Calu3 (cell line): ENCODE measurements at regions of chr20 and their contacts with region 1.

Region 1: GRCh38 chr20:57709931-57710799 is at the start of gene PMEPA1:
- DNase-seq: peak; percentile 100
- H3K4me3 Mint-ChIP-seq: peak within 1 kb of the TSS; percentile 88
- H3K27ac Mint-ChIP-seq: peak within 1 kb of the TSS; percentile 97
- H3K4me1 Mint-ChIP-seq: peaks cover 46% of the 10 kb centered on the region
- H3K27me3 Mint-ChIP-seq: no peaks in the 10 kb centered on the region
- CTCF ChIP-seq: no peak
- total RNA-seq, gene PMEPA1: 732 and 1,302 TPM in 2 replicates

Region 2: GRCh38 chr20:57622579-57623377 is 87.4 kb before region 1 on chr20:
- CTCF ChIA-PET with region 1: interaction called, 12 read pairs
- intact Hi-C with region 1: no loop called
- DNase-seq: peak; percentile 96
- H3K4me3 Mint-ChIP-seq: peak overlapping the region; percentile 11
- H3K27ac Mint-ChIP-seq: peak overlapping the region; percentile 18
- H3K4me1 Mint-ChIP-seq: peaks cover 40% of the 10 kb centered on the region
- H3K27me3 Mint-ChIP-seq: no peaks in the 10 kb centered on the region
- CTCF ChIP-seq: peak; percentile 99

Region 3: DNA sequence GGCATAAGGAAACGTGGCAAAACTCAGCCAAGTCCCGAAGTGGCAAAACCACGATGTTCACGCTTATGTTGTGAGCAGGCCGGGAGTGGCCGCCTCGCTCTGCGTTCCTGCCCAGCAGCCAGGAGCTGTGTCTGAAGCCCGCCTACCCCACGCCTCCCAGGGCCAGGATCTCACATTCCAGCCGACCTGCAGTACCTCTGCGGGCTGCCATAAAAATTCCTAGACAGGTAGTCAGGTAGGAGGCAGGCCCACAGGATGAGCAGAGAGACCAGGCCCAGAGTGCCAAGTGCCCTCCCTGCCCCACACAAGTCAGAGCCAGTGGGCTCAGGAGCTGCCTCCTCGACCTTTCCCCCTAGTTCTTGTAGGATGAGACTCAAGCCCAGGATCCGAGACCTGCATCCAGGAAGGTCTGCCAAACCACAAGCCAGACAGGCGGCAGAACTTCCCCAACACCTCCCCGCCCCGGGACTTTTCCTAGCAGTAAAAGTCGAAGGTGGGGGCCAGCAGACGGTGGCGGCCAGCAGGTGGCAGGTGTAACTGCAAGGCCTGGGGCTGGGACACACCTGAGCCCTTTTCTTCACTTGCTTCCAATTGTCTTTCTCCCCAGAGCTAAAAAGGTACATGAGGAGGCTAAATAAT is 17.0 kb before region 1 on chr20:
- CTCF ChIA-PET with region 1: interaction called, 21 read pairs
- intact Hi-C with region 1: loop called (anchors 1 kb)
- DNase-seq: peak; percentile 94
- H3K4me3 Mint-ChIP-seq: peak overlapping the region; percentile 88
- H3K27ac Mint-ChIP-seq: peak overlapping the region; percentile 97
- H3K4me1 Mint-ChIP-seq: peaks cover 91% of the 10 kb centered on the region
- H3K27me3 Mint-ChIP-seq: no peaks in the 10 kb centered on the region
- CTCF ChIP-seq: peak; percentile 68

Region 4: GRCh38 chr20:57698117-57698866 is 11.9 kb before region 1 on chr20:
- CTCF ChIA-PET with region 1: interaction called, 21 read pairs
- intact Hi-C with region 1: loop called (anchors 1 kb)
- DNase-seq: peak; percentile 94
- H3K4me3 Mint-ChIP-seq: peak overlapping the region; percentile 88
- H3K27ac Mint-ChIP-seq: peak overlapping the region; percentile 97
- H3K4me1 Mint-ChIP-seq: peaks cover 92% of the 10 kb centered on the region
- H3K27me3 Mint-ChIP-seq: no peaks in the 10 kb centered on the region
- CTCF ChIP-seq: no peak

Region 5: GRCh38 chr20:57755608-57756007 is 45.4 kb after region 1 on chr20:
- CTCF ChIA-PET with region 1: no interaction called
- intact Hi-C with region 1: no loop called
- DNase-seq: no peak
- H3K4me3 Mint-ChIP-seq: no peak overlapping the region
- H3K27ac Mint-ChIP-seq: no peak overlapping the region
- H3K4me1 Mint-ChIP-seq: peaks cover 10% of the 10 kb centered on the region
- H3K27me3 Mint-ChIP-seq: no peaks in the 10 kb centered on the region
- CTCF ChIP-seq: no peak

Region 6: GRCh38 chr20:57902290-57902872 is 192.2 kb after region 1 on chr20:
- CTCF ChIA-PET with region 1: interaction called, 5 read pairs
- intact Hi-C with region 1: loop called (anchors 1 kb)
- DNase-seq: peak; percentile 63
- H3K4me3 Mint-ChIP-seq: peak overlapping the region; percentile 11
- H3K27ac Mint-ChIP-seq: peak overlapping the region; percentile 76
- H3K4me1 Mint-ChIP-seq: peaks cover 77% of the 10 kb centered on the region
- H3K27me3 Mint-ChIP-seq: no peaks in the 10 kb centered on the region
- CTCF ChIP-seq: peak; percentile 40

Region 7: DNA sequence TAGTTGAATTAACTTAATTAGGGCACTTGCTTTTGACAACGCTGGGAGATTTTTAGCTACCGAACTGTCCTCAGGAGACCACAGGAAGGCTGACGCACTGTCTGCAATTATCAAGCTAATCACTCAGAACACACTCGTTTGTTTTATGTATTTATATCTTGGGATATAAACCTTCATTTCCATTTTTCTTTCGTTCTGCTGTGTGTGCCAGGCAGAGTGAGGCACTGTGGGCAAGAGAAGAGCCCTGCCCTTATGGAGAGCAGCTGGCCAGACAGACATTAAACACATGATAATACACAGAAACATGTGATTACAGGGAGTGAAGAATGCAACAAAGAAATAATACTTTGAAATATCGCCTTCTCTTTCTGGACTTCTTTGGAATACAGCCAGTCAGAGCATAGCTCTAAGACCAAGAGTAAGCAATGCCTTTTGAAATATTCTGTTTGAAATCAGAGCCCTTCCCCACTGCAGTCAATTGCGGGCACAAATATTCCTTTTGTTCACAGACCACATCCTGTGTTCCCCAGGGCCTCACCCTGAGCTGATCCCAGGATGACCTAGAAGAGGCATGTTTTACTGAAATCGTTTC is 421.5 kb after region 1 on chr20:
- CTCF ChIA-PET with region 1: interaction called, 4 read pairs
- intact Hi-C with region 1: loop called (anchors 5 kb)
- DNase-seq: peak; percentile 86
- H3K4me3 Mint-ChIP-seq: peak overlapping the region; percentile 63
- H3K27ac Mint-ChIP-seq: peak overlapping the region; percentile 99
- H3K4me1 Mint-ChIP-seq: peaks cover 89% of the 10 kb centered on the region
- H3K27me3 Mint-ChIP-seq: no peaks in the 10 kb centered on the region
- CTCF ChIP-seq: no peak

Region 8: DNA sequence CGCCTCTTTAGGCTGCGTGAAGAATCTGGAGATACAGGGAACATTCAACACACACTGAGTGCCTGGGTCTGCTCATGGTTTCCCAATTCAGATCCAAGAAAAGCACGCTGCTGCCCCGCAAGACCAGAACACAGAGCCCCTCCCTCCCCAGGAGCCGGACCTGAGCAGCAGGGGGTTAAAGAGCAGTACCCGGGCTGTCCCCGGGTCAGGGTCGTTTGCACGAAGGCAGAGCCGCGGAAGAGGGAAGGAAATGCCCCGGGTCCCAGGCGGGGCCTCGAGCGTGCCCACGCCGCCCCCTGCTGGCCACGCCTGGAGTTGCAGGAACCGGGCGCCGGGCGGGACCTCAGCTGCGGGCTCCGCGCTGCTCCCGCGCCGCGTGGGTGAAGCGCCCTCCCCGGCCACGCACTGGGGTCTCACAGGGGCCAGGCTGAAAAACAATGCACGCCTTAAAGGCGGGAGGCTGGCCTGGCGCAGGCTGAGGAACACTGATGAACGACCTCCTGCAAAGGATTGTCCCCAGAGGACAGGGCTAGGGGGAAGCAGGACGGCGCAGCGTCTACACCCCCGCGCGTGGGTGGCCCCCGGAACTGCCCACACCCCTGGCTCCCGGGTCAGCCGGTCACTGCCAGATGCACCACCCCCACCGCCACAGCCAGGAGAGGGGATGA is 469.4 kb after region 1 on chr20:
- CTCF ChIA-PET with region 1: interaction called, 7 read pairs
- intact Hi-C with region 1: loop called (anchors 1 kb)
- DNase-seq: peak; percentile 92
- H3K4me3 Mint-ChIP-seq: peak overlapping the region; percentile 68
- H3K27ac Mint-ChIP-seq: peak overlapping the region; percentile 91
- H3K4me1 Mint-ChIP-seq: peaks cover 35% of the 10 kb centered on the region
- H3K27me3 Mint-ChIP-seq: no peaks in the 10 kb centered on the region
- CTCF ChIP-seq: peak; percentile 100